Mucosa of descending colon (tissue), 3 donors: ENCODE measurements at regions of chrX and their contacts with region 1.

Region 1: GRCh38 chrX:30781711-30782444 is 107.2 kb downstream of the TAB3 start:
- DNase-seq: no peak
- ATAC-seq: no peak
- H3K4me3 ChIP-seq: no peak overlapping the region
- H3K4me1 ChIP-seq: no peaks in the 10 kb centered on the region
- CTCF ChIP-seq: no peak

Region 2: DNA sequence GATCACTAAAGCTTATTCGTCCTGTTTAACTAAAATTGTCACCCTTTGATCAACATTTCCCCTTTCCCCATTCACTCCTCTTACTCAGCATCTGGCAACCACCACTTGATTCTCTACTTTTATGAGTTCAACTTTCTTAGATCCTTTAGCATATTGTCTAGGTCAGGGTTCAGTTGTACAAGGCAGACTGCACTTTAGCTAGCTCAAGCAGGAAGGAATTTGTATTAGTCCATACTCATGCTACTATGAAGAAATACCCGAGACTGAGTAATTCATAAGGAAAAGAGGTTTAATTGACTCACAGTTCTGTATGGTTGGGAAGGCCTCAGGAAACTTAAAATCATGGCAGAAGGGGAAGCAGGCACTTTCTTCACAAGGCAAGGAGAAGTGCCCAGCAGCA is 248.6 kb before region 1 on chrX:
- intact Hi-C with region 1: no loop called
- DNase-seq: no peak
- ATAC-seq: peak; percentile 54
- H3K4me3 ChIP-seq: no peak overlapping the region
- H3K4me1 ChIP-seq: no peaks in the 10 kb centered on the region
- CTCF ChIP-seq: no peak

Region 3: GRCh38 chrX:30673127-30673796 is 108.6 kb before region 1 on chrX:
- intact Hi-C with region 1: no loop called
- DNase-seq: peak in 1 of 3 donors; percentile 23
- ATAC-seq: peak; percentile 60
- H3K4me3 ChIP-seq: no peak overlapping the region
- H3K4me1 ChIP-seq: peaks cover 2% of the 10 kb centered on the region
- CTCF ChIP-seq: no peak

Region 4: GRCh38 chrX:30981968-30982367 is 200.1 kb after region 1 on chrX:
- intact Hi-C with region 1: loop called in 1 of 2 experiments (anchors 10 kb)
- DNase-seq: no peak
- ATAC-seq: no peak
- H3K4me3 ChIP-seq: no peak overlapping the region
- H3K4me1 ChIP-seq: no peaks in the 10 kb centered on the region
- CTCF ChIP-seq: no peak